ENCODE measurements at regions of chr7 and their contacts with region 1.

Region 1: DNA sequence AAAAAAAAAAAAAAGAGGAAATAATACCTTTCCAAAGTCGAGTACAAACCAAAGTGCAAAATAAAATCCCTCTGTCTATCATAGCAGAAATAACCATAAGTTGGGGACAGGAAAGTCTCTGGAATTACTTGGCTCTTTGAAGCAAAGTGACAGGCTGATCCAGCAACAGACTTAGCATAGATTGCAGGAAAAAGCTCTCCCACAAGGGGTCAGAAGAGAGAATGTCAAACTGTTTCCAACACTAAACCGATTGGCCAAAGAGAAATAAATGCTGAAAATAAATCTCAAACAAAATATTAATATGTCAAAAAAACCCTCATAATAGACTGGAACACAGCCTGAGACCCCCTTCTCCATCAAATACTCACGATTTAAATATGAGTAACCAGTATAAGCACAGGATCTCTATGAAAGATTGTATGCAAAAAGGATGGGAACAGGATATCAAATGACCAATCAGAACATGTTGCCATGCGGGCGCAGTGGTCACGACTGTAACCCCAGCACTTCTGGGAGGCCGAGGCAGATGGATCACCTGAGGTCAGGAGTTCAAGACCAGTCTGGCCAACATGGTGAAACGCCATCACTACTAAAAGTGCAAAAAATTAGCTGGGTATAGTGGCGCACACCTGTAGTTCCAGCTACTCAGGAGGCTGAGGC is 1000.7 kb upstream of the LRRN3 start:
- DNase-seq: peak; percentile 37
- ATAC-seq: peak; percentile 85
- H3K4me3 ChIP-seq: no peak overlapping the region
- H3K27ac ChIP-seq: no peak overlapping the region
- H3K4me1 ChIP-seq: no peaks in the 10 kb centered on the region
- H3K27me3 ChIP-seq: no peaks in the 10 kb centered on the region
- CTCF ChIP-seq: peak; percentile 62
- EP300 ChIP-seq: no peak
- POLR2A ChIP-seq: no peak
- RAD21 ChIP-seq: 0 out of 2 replicates have a peak, but pooled peaks have one; percentile 14

Region 2: GRCh38 chr7:108613112-108613759 is 1477.0 kb before region 1 on chr7:
- CTCF ChIA-PET with region 1: no interaction called
- POLR2A ChIA-PET with region 1: no interaction called
- in situ Hi-C with region 1: loop called (anchors 25 kb)
- intact Hi-C with region 1: no loop called
- DNase-seq: peak; percentile 32
- ATAC-seq: peak; percentile 69
- H3K4me3 ChIP-seq: no peak overlapping the region; a peak in 1 of 6 replicates
- H3K27ac ChIP-seq: no peak overlapping the region
- H3K4me1 ChIP-seq: peaks cover 19% of the 10 kb centered on the region
- H3K27me3 ChIP-seq: no peaks in the 10 kb centered on the region
- CTCF ChIP-seq: peak; percentile 63
- EP300 ChIP-seq: no peak
- POLR2A ChIP-seq: no peak
- RAD21 ChIP-seq: no peak

Region 3: DNA sequence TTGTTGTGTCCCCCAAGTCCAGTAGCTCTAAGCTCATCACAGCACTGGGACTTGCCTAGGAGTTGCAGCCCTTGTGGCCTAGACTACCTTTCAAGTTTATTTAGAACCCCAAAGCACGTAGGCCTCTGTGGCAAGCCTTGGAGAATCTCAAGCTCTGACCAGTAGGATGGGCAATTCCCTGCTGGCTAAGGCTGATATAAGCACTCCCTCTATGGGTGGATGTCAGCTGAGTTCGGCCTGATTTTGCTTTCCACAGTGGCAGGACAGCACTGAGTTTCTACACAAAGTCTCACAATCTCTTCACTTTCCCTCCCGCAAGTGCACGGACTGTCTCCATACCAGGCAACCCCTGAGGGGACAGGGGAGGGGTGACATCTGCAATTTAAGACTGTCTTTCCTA is 114.3 kb after region 1 on chr7:
- CTCF ChIA-PET with region 1: no interaction called
- POLR2A ChIA-PET with region 1: no interaction called
- in situ Hi-C with region 1: no loop called
- intact Hi-C with region 1: loop called (anchors 1 kb)
- DNase-seq: no peak
- ATAC-seq: peak; percentile 89
- H3K4me3 ChIP-seq: no peak overlapping the region
- H3K27ac ChIP-seq: no peak overlapping the region
- H3K4me1 ChIP-seq: no peaks in the 10 kb centered on the region
- H3K27me3 ChIP-seq: no peaks in the 10 kb centered on the region
- CTCF ChIP-seq: peak; percentile 50
- EP300 ChIP-seq: no peak
- POLR2A ChIP-seq: no peak
- RAD21 ChIP-seq: no peak

Region 4: GRCh38 chr7:110442381-110442837 is 352.2 kb after region 1 on chr7:
- CTCF ChIA-PET with region 1: interaction called, 6 read pairs
- POLR2A ChIA-PET with region 1: no interaction called
- in situ Hi-C with region 1: loop called (anchors 10 kb)
- intact Hi-C with region 1: loop called (anchors 1 kb)
- DNase-seq: peak; percentile 49
- ATAC-seq: peak; percentile 99
- H3K4me3 ChIP-seq: no peak overlapping the region
- H3K27ac ChIP-seq: no peak overlapping the region
- H3K4me1 ChIP-seq: no peaks in the 10 kb centered on the region
- H3K27me3 ChIP-seq: no peaks in the 10 kb centered on the region
- CTCF ChIP-seq: peak; percentile 80
- EP300 ChIP-seq: no peak
- POLR2A ChIP-seq: no peak
- RAD21 ChIP-seq: peak; percentile 50; the same call in 1 of the 2 replicates

Region 5: GRCh38 chr7:111098011-111098925 is 1008.0 kb after region 1 on chr7:
- CTCF ChIA-PET with region 1: interaction called, 4 read pairs
- POLR2A ChIA-PET with region 1: no interaction called
- in situ Hi-C with region 1: loop called (anchors 25 kb)
- intact Hi-C with region 1: loop called (anchors 1 kb)
- DNase-seq: peak; percentile 20
- ATAC-seq: peak; percentile 68
- H3K4me3 ChIP-seq: no peak overlapping the region
- H3K27ac ChIP-seq: no peak overlapping the region
- H3K4me1 ChIP-seq: no peaks in the 10 kb centered on the region
- H3K27me3 ChIP-seq: no peaks in the 10 kb centered on the region
- CTCF ChIP-seq: peak; percentile 77
- EP300 ChIP-seq: no peak
- POLR2A ChIP-seq: no peak
- RAD21 ChIP-seq: peak; percentile 33; the same call in 1 of the 2 replicates

Region 6: GRCh38 chr7:111486472-111487142 is 1396.4 kb after region 1 on chr7:
- CTCF ChIA-PET with region 1: interaction called, 4 read pairs
- POLR2A ChIA-PET with region 1: no interaction called
- in situ Hi-C with region 1: no loop called
- intact Hi-C with region 1: loop called (anchors 10 kb)
- DNase-seq: peak; percentile 41
- ATAC-seq: peak; percentile 46
- H3K4me3 ChIP-seq: no peak overlapping the region
- H3K27ac ChIP-seq: no peak overlapping the region
- H3K4me1 ChIP-seq: no peaks in the 10 kb centered on the region
- H3K27me3 ChIP-seq: no peaks in the 10 kb centered on the region
- CTCF ChIP-seq: peak; percentile 73
- EP300 ChIP-seq: no peak
- POLR2A ChIP-seq: no peak
- RAD21 ChIP-seq: peak; percentile 39; the same call in 1 of the 2 replicates